Activated T-helper 2 cell treated with anti-CD3 and anti-CD28 coated beads, Interferon-gamma antibody, Interleukin-2, Interleukin-4, amounts not matched to agents 10 μg/mL and 5 μg/mL and 100 μg/mL, durations not matched to agents 14 hours and 24 hours and 36 hours (primary cell): ENCODE measurements at regions of chr3 and their contacts with region 1.

Region 1: GRCh38 chr3:64399205-64399800 is 174.0 kb upstream of the PRICKLE2 start:
- DNase-seq: no peak
- H3K4me3 Mint-ChIP-seq: no peak overlapping the region
- H3K27ac Mint-ChIP-seq: no peak overlapping the region
- H3K4me1 Mint-ChIP-seq: peaks cover 2% of the 10 kb centered on the region
- H3K27me3 Mint-ChIP-seq: no peaks in the 10 kb centered on the region

Region 2: GRCh38 chr3:64030741-64031140 is 368.6 kb before region 1 on chr3:
- intact Hi-C with region 1: loop called (anchors 1 kb)
- DNase-seq: peak; percentile 61
- H3K4me3 Mint-ChIP-seq: peak overlapping the region; percentile 64
- H3K27ac Mint-ChIP-seq: peak overlapping the region; percentile 64
- H3K4me1 Mint-ChIP-seq: peaks cover 16% of the 10 kb centered on the region
- H3K27me3 Mint-ChIP-seq: peaks cover 27% of the 10 kb centered on the region

Region 3: DNA sequence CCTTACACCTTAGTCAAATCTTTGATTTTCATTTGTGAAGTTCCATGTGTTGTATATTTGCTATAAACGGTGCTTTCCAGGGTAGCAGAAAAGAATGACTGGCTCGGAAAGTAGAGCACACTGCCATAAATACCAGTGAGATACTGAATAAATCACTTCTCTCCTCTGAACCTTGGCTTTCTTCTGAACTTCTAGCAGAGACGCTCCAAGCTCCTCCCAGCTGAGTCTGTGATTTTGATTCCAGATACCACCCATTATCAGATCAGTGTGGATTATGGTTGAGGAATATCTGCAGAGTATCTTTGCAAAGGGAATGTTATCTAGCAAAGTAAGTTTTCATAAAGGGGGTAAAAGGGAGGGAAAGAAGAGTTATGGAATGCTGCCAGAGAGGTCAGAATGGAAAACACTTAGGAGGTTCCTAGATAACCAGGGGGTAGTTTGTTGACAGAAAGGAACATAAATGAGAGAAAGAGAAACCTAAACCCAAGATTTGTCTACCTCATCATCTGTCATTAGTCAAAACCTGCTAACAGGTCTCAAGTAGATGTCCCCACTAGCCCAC is 277.5 kb before region 1 on chr3:
- intact Hi-C with region 1: no loop called
- DNase-seq: no peak
- H3K4me3 Mint-ChIP-seq: no peak overlapping the region
- H3K27ac Mint-ChIP-seq: no peak overlapping the region
- H3K4me1 Mint-ChIP-seq: no peaks in the 10 kb centered on the region
- H3K27me3 Mint-ChIP-seq: no peaks in the 10 kb centered on the region

Region 4: DNA sequence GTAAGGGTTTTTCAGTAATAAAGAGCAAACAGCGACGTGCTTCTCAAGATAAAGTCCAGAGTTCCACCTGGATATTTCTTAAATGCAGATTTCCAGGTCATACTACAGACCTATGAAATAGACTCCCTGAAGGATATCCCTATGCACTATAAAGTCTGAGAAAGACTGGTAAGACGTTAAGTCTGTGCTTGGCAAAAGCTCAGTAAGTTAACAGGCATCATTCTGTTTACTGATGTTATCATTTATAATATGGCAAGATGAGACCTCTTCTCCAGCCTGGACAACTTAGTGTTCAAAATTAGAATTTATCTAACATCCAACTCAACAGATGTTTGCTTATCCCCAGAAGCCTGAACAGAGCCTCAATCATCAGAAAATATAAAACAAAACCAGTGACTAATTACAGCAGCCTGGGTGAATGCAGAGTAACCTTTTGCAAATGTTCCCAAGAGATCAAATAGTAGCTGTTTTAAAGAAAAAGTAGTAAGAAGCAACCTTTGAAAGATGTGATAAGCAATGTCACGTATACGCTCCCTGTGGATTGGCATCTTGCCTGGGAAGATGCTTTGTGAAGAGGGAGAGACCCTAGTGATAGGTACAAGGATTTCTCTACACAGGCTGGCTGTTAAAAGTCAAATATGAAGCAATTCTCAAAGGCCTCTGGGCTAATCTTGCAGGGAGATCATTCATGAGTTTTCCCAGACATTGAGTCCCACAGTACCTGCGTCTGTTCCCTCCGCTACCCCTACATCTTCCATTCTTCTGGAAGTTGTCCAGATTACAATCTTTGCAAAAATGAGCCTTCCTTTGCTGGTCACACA is 134.8 kb before region 1 on chr3:
- intact Hi-C with region 1: loop called (anchors 5 kb)
- DNase-seq: no peak
- H3K4me3 Mint-ChIP-seq: no peak overlapping the region
- H3K27ac Mint-ChIP-seq: no peak overlapping the region
- H3K4me1 Mint-ChIP-seq: peaks cover 3% of the 10 kb centered on the region
- H3K27me3 Mint-ChIP-seq: peaks cover 21% of the 10 kb centered on the region

Region 5: GRCh38 chr3:64484289-64484992 is 85.1 kb after region 1 on chr3:
- intact Hi-C with region 1: loop called (anchors 5 kb)
- DNase-seq: peak; percentile 54
- H3K4me3 Mint-ChIP-seq: no peak overlapping the region
- H3K27ac Mint-ChIP-seq: no peak overlapping the region
- H3K4me1 Mint-ChIP-seq: peaks cover 6% of the 10 kb centered on the region
- H3K27me3 Mint-ChIP-seq: peaks cover 18% of the 10 kb centered on the region

Region 6: GRCh38 chr3:64505419-64505818 is 106.1 kb after region 1 on chr3:
- intact Hi-C with region 1: no loop called
- DNase-seq: no peak
- H3K4me3 Mint-ChIP-seq: no peak overlapping the region
- H3K27ac Mint-ChIP-seq: peak overlapping the region; percentile 76
- H3K4me1 Mint-ChIP-seq: peaks cover 11% of the 10 kb centered on the region
- H3K27me3 Mint-ChIP-seq: peaks cover 3% of the 10 kb centered on the region